Right ventricle myocardium inferior (tissue), 1 donor: ENCODE measurements at regions of chr19 and their contacts with region 1.

Region 1: GRCh38 chr19:40598121-40598917 is 2.9 kb upstream of the LTBP4 start:
- DNase-seq: peak; percentile 94
- ATAC-seq: peak; percentile 63

Region 2: DNA sequence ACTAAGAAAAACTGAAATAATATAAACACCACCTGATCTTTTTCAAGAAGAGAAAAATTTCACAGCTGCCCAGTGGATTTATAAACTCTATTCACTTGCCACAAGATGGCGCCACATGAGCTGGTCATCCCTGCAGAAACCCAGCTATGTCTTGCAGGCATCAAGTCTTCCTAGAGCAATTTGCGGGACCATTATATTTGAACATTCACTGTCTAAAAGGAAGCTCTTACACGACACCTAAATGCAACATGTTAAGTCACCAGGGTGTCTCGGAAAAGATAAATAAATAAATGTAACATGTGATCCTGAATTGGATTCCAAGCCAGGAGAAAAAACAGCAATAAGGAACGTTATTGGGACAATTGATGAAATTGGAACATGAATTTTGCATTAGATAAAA is 292.9 kb before region 1 on chr19:
- intact Hi-C with region 1: loop called (anchors 2 kb)
- DNase-seq: no peak
- ATAC-seq: no peak

Region 3: DNA sequence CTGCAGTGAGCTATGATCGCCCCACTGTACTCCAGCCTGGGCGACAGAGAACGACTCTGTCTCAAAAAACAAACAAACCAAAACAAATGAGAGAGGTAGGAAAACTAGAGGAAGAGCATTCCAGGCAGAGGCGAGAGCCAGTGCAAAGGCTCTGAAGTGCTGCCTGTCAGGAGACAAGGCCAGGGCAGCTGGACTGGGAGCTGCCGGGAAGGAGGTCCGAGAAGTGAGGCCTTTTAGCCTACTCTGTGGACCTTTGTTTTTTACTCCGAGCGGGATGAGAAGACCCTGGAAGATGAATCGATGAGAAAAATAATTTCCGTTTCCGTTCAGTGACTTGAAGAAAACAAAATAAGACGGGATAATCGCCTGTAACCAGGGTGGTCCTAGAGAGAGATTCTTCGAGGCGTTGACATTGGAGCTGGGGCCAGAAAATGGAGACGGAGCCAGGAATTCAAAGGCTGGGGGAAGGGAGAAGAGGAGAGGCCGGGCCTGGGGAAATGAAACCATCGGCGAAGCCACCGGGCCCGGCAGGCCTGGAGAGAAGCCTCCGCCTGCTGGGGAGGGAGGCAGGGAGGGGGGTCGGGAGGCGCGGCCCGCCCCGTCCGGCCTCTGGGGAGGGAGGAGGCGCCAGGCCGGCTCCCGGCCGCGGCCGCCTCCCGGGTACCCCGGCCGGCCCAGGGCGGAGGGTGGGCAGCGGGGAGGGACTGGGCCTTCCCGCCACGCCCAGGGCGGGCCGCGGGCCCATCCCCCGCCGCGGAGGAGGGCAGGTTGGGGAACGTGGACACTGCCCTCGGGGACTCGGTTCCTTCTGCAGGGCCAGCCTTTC is 164.7 kb before region 1 on chr19:
- intact Hi-C with region 1: no loop called
- DNase-seq: peak; percentile 91
- ATAC-seq: peak; percentile 98

Region 4: DNA sequence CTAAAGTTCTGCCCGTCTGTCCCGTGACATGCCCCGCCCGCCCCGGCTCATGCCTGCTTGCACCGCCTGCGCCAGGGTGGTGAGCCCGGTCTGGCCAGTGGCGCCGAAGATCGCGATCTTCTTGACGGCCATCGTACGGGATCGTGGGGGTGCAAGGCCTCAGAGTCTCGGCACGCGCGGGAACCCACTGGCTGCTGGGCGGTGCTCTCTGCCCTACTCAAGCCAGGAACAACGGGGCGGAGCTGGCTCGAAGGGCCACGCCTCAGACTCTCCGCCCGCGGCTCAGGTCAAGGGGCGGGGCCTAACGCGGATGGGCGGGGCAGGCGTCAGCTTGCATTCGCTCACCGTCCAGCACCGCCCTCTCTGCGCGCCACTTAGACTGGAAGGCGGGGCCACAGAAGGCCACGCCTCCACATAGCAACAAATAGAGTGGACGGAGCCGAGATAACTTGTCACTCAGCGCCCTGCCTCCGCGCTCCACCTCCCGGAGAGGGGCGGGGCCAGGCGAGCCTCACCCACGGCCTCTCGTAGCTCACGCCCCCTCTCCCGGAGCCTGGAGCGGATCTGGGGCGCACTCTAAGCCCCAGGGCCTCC is 132.7 kb before region 1 on chr19 and contains the start of gene BLVRB:
- intact Hi-C with region 1: loop called (anchors 5 kb)
- DNase-seq: peak; percentile 100
- ATAC-seq: peak; percentile 97
- total RNA-seq, gene BLVRB: 127 TPM

Region 5: DNA sequence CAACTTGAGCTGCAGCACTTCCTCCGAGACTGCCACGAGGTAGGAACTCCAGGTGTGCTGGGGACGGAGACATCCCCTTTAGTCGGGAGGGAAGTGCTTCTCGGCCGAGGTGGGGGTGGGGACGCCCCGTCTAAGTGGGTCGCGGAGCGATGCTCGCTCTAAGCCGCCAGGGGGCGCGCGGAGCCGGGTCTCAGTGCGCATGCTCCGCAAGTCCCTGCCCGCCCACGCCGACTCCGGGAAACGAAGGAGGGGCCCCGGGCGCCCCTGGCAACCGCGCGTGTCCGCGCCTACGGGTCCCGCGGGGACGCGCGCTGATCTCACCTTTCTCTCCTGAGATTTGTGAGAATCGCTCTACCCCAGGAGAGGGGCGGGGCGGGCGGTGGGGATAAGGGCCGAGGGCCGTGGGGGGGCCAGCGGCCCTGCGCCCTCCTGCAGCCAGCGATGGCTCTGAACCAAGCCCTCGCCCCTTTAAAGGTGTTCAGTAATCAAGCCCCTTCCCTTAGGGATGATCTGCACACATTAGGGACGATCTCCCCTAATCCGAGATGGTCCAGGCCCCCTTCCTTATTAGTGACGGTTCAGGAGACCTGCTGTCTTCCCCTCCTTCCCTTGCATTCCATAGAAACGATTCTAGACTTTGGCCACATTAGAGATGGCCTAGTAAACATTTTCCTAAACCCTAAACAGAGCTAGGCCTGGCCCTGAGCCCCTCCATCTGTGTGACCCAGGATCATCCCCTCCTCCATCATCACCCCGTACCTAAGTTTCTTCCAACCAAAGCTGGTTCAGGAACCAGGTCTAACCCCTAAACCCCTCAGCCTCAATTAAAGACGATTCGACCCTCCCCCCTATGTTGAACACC is 69.0 kb before region 1 on chr19:
- intact Hi-C with region 1: loop called (anchors 1 kb)
- DNase-seq: peak; percentile 92
- ATAC-seq: peak; percentile 84

Region 6: DNA sequence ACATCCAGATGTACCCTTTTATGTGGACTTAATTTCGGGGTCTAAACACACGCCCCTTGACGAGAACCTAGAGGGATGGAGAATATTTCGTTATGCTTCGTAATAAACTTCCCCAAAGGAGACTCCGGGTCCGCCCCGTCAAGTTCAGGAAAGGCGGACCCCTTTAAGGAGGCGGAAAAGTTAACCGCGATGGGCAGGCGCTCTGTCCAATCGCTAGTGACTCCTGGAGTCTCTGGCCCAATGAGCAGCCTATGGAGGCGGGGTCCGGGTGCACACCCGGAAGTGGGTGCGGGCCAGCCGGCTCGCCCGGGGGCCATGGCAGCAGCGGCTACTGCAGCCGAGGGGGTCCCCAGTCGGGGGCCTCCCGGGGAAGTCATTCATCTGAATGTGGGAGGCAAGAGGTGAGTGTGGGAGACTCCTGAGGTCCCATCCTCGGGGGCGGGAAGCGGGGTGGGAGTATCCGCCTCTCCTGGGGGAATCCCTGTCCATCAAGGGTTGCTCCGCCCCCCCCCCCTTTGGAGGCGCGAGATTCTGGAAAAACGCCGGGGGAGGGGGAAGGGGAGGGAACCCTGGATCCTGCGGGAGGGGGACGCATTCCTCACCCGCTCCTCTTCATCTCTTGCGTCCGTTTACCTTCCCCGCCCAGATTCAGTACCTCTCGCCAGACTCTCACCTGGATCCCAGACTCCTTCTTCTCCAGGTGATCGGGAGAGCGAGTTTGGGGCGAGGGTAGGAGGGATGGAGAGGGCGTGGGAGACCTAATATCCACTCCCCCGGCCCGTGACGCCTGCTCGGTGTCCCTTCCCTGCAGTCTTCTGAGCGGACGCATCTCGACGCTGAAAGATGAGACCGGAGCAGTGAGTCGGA is 21.5 kb before region 1 on chr19 and contains the start of gene SHKBP1:
- intact Hi-C with region 1: loop called (anchors 2 kb)
- DNase-seq: peak; percentile 96
- ATAC-seq: peak; percentile 98
- total RNA-seq, gene SHKBP1: 20.6 TPM

Region 7: DNA sequence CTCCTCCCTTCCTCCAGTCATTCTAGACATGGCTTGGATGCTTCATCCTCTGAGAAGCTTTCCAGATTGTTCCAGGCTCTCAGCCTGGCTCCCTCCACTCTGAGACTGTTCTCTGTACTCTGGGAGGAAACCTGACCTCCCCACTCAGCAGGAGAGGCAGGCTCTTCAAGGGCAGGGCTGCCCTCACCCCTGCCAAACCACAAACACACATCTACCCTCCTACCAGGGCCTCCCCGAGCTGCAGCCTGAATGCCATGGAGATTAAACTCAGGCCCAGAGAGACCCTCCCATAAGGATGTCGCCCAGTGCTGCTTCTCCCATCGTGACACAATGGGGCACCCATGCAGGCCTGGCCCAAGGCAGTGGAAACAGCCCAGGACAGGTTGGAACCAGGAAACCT is 76.0 kb after region 1 on chr19:
- intact Hi-C with region 1: no loop called
- DNase-seq: no peak
- ATAC-seq: no peak

Region 8: GRCh38 chr19:40798223-40798996 is 200.1 kb after region 1 on chr19:
- intact Hi-C with region 1: no loop called
- DNase-seq: peak; percentile 100
- ATAC-seq: peak; percentile 91